T-cell (primary cell): ENCODE measurements at regions of chr5 and their contacts with region 1.

Region 1: GRCh38 chr5:159156426-159157238 is 52.7 kb downstream of the RNF145 start:
- DNase-seq: peak in 25 of 35 experiments; percentile 3 to 87 (median 24)
- ATAC-seq: peak; percentile 70 to 88 (median 80)
- H3K4me3 ChIP-seq: no peak overlapping the region
- H3K4me3 Mint-ChIP-seq: no peak overlapping the region
- H3K27ac ChIP-seq: peak overlapping the region; percentile 25
- H3K27ac Mint-ChIP-seq: peak overlapping the region; percentile 37 to 73
- H3K4me1 ChIP-seq: peaks cover 4 to 9% of the 10 kb centered on the region in 2 experiments
- H3K4me1 Mint-ChIP-seq: peaks cover 12 to 31% (median 25%) of the 10 kb centered on the region in 3 donors
- H3K27me3 ChIP-seq: no peaks in the 10 kb centered on the region
- H3K27me3 Mint-ChIP-seq: no peaks in the 10 kb centered on the region

Region 2: DNA sequence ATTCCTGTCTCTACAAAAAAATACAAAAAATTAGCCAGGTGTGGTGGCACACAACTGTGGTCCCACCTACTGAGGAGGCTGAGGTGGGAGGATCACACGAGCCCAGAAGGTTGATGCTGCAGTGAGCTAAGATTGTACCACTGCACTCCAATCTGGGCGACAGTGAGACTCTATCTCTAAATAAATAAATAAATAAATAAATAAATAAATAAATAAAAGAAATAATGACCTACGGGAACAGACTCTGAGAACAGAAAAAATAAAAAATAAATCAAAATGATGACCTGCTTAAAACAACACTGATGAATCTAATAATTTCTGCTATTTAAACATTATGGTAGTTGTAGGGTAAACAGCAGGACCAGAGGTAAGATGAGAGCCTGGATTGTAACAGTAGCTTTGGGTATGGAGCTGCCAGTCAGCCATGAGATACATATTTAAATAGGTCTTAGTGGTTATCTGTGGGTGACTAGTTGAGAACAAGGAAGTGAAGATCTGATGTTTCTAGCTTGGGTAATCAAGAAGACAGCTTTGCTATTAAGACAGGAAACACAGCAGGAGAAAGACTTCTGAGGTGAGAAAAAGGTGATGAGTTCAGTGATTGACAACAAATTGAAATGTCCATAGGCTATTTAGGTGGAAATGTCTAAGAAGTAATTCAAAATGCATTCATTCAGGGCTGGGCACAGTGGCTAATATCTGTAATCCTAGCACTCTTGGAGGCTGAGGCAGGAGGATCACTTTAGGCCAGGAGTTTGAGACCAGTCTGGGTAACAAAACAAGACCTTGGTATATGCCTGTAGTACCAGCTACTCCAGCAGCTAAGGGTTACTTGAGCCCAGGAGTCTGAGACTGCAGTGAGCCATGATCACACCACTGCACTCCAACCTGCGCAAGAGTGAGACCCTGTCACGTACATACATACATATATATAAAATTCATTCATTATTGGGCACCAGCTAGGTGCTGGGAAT is 41.7 kb after region 1 on chr5:
- CTCF ChIA-PET with region 1: interaction called in 1 of 2 experiments, 11 read pairs
- POLR2A ChIA-PET with region 1: interaction called, 3 to 5 read pairs
- DNase-seq: peak in 1 of 35 experiments; percentile 57
- ATAC-seq: peak; percentile 77 to 94 (median 88)
- H3K4me3 ChIP-seq: no peak overlapping the region
- H3K4me3 Mint-ChIP-seq: peak overlapping the region in 2 of 3 donors; percentile 5 to 34
- H3K27ac ChIP-seq: peak overlapping the region; percentile 30
- H3K27ac Mint-ChIP-seq: peak overlapping the region; percentile 47 to 78
- H3K4me1 ChIP-seq: peaks cover 24 to 32% of the 10 kb centered on the region in 2 experiments
- H3K4me1 Mint-ChIP-seq: peaks cover 76 to 79% (median 79%) of the 10 kb centered on the region in 3 donors
- H3K27me3 ChIP-seq: no peaks in the 10 kb centered on the region
- H3K27me3 Mint-ChIP-seq: no peaks in the 10 kb centered on the region

Region 3: DNA sequence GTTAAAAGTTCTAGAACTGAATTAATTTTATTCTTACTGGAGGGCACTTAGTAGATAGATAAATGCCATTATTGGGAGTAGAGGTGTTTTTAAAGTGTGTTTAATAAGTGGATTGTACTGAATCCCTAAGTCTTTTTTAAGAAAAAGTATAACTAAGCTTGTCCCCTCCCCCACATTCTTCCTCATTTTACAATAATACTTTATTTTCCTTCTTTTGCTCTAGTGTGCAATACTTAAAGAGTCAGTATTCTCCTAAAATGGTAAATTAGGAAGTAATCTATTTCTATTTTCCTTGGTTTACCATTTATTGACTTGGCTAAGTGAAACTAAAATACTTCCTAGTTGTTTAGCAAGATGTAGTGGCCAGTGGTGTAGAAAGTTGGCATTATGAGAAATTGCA is 118.0 kb after region 1 on chr5:
- CTCF ChIA-PET with region 1: interaction called, 3 to 13 read pairs
- POLR2A ChIA-PET with region 1: no interaction called
- DNase-seq: no peak
- ATAC-seq: no peak
- H3K4me3 ChIP-seq: no peak overlapping the region
- H3K4me3 Mint-ChIP-seq: no peak overlapping the region
- H3K27ac ChIP-seq: no peak overlapping the region
- H3K27ac Mint-ChIP-seq: peak overlapping the region; percentile 19 to 55
- H3K4me1 ChIP-seq: no peaks in the 10 kb centered on the region
- H3K4me1 Mint-ChIP-seq: peaks cover 5 to 40% (median 24%) of the 10 kb centered on the region in 3 donors
- H3K27me3 ChIP-seq: no peaks in the 10 kb centered on the region
- H3K27me3 Mint-ChIP-seq: no peaks in the 10 kb centered on the region

Region 4: GRCh38 chr5:159316519-159317383 is 160.1 kb after region 1 on chr5:
- CTCF ChIA-PET with region 1: interaction called, 28 to 51 read pairs
- POLR2A ChIA-PET with region 1: interaction called in 1 of 2 experiments, 3 read pairs
- DNase-seq: peak in 26 of 35 experiments; percentile 5 to 69 (median 30)
- ATAC-seq: peak in 3 of 4 experiments; percentile 43 to 71 (median 49)
- H3K4me3 ChIP-seq: no peak overlapping the region
- H3K4me3 Mint-ChIP-seq: no peak overlapping the region
- H3K27ac ChIP-seq: no peak overlapping the region
- H3K27ac Mint-ChIP-seq: no peak overlapping the region
- H3K4me1 ChIP-seq: no peaks in the 10 kb centered on the region
- H3K4me1 Mint-ChIP-seq: no peaks in the 10 kb centered on the region
- H3K27me3 ChIP-seq: peaks cover 0 to 5% of the 10 kb centered on the region in 2 experiments
- H3K27me3 Mint-ChIP-seq: peaks cover 0 to 4% of the 10 kb centered on the region in 2 donors